GM12878 (cell line): ENCODE measurements at regions of chr3 and their contacts with region 1.

Region 1: DNA sequence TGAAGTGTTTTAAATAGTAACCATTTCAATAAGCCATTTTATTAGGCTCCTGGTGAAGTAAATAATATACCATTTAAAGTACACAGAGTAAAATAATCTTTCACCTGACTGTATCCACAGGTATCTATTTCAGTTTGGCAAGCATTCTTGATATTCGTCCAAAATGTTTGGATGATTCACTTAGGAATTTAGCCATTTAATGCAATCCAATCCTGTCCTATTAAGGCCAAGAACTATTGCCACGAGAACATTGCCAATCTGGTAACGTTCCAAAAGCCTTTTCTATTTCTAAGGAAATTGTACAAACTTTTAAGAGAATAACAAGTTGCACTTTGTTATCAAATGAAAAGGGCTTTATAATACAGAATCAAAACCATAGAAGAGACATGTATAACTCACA is 209.8 kb upstream of the THRB start:
- DNase-seq: no peak
- ATAC-seq: no peak
- H3K4me3 ChIP-seq: no peak overlapping the region
- H3K27ac ChIP-seq: no peak overlapping the region
- H3K4me1 ChIP-seq: no peaks in the 10 kb centered on the region
- H3K27me3 ChIP-seq: no peaks in the 10 kb centered on the region; a peak in 2 of 4 replicates
- CTCF ChIP-seq: no peak
- EP300 ChIP-seq: no peak
- POLR2A ChIP-seq: no peak
- RAD21 ChIP-seq: no peak

Region 2: DNA sequence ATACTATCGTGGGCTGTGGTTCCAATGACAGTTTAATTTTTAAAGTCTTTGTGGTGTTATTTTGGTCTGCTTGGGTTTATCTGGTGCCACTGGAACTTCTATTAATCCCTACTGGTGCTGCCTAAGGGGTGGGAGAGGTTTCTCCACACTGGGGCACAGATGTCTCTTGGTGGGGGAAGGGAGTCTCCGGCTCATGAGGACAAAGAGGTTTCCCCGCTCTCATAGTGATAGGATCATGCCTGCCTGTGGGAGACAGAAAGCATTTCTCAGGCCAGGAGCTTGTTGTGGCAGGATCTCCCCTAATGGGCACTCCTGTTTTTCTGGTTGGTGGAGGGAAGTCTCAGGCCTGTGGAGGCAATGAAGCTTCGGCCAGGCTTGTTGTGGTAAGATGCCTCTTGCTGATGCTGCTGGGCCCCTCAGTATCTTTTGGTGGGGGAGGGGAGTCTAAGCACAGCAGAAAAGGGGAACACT is 125.5 kb before region 1 on chr3:
- CTCF ChIA-PET with region 1: no interaction called
- POLR2A ChIA-PET with region 1: no interaction called
- RAD21 ChIA-PET with region 1: no interaction called
- SMC1A ChIA-PET with region 1: no interaction called
- in situ Hi-C with region 1: no loop called
- intact Hi-C with region 1: no loop called
- DNase-seq: no peak
- ATAC-seq: no peak
- H3K4me3 ChIP-seq: no peak overlapping the region
- H3K27ac ChIP-seq: no peak overlapping the region
- H3K4me1 ChIP-seq: no peaks in the 10 kb centered on the region
- H3K27me3 ChIP-seq: no peaks in the 10 kb centered on the region
- CTCF ChIP-seq: no peak
- EP300 ChIP-seq: no peak
- POLR2A ChIP-seq: no peak
- RAD21 ChIP-seq: no peak

Region 3: GRCh38 chr3:24680214-24680967 is 24.1 kb before region 1 on chr3:
- CTCF ChIA-PET with region 1: interaction called, 13 read pairs
- POLR2A ChIA-PET with region 1: no interaction called
- RAD21 ChIA-PET with region 1: no interaction called
- SMC1A ChIA-PET with region 1: no interaction called
- in situ Hi-C with region 1: no loop called
- intact Hi-C with region 1: no loop called
- DNase-seq: no peak
- ATAC-seq: peak; percentile 95
- H3K4me3 ChIP-seq: no peak overlapping the region
- H3K27ac ChIP-seq: no peak overlapping the region
- H3K4me1 ChIP-seq: no peaks in the 10 kb centered on the region
- H3K27me3 ChIP-seq: no peaks in the 10 kb centered on the region; a peak in 1 of 4 replicates
- CTCF ChIP-seq: peak; percentile 74 to 84 (median 81)
- EP300 ChIP-seq: no peak
- POLR2A ChIP-seq: no peak
- RAD21 ChIP-seq: peak; percentile 53

Region 4: GRCh38 chr3:24730173-24730572 is 25.7 kb after region 1 on chr3:
- CTCF ChIA-PET with region 1: no interaction called
- POLR2A ChIA-PET with region 1: no interaction called
- RAD21 ChIA-PET with region 1: no interaction called
- SMC1A ChIA-PET with region 1: no interaction called
- in situ Hi-C with region 1: no loop called
- intact Hi-C with region 1: no loop called
- DNase-seq: no peak
- ATAC-seq: no peak
- H3K4me3 ChIP-seq: no peak overlapping the region
- H3K27ac ChIP-seq: no peak overlapping the region
- H3K4me1 ChIP-seq: no peaks in the 10 kb centered on the region
- H3K27me3 ChIP-seq: no peaks in the 10 kb centered on the region
- CTCF ChIP-seq: no peak
- EP300 ChIP-seq: no peak
- POLR2A ChIP-seq: no peak
- RAD21 ChIP-seq: no peak

Region 5: DNA sequence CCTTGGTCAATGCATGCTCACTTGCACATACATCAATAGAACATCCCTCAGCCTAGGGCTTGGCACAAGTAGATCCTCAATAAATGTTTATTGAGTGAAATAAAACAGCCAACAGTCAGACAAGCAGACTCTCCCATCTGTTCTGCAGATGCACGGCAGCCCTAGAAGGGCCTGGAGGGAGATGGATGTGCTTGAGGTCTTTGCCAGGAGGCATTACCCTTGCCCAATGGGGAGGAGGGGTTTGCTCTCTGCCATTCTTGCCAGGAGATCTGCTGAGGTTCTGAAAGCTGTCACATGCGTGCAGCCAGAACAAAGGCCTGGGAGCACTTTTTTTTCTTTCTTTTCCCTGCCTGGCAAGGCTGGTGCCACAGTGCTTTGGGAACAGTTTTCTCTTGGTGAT is 139.5 kb after region 1 on chr3:
- CTCF ChIA-PET with region 1: no interaction called
- POLR2A ChIA-PET with region 1: no interaction called
- RAD21 ChIA-PET with region 1: no interaction called
- SMC1A ChIA-PET with region 1: no interaction called
- in situ Hi-C with region 1: no loop called
- intact Hi-C with region 1: no loop called
- DNase-seq: no peak
- ATAC-seq: no peak
- H3K4me3 ChIP-seq: no peak overlapping the region
- H3K27ac ChIP-seq: no peak overlapping the region
- H3K4me1 ChIP-seq: no peaks in the 10 kb centered on the region
- H3K27me3 ChIP-seq: no peaks in the 10 kb centered on the region
- CTCF ChIP-seq: no peak
- EP300 ChIP-seq: no peak
- POLR2A ChIP-seq: no peak
- RAD21 ChIP-seq: no peak